T-cell (primary cell): ENCODE measurements at regions of chr14 and their contacts with region 1.

Region 1: GRCh38 chr14:103808403-103809001 is 38.9 kb downstream of the PPP1R13B start:
- DNase-seq: peak; percentile 19 to 82 (median 55)
- ATAC-seq: peak; percentile 74 to 91 (median 82)
- H3K4me3 ChIP-seq: no peak overlapping the region
- H3K4me3 Mint-ChIP-seq: no peak overlapping the region
- H3K27ac ChIP-seq: no peak overlapping the region
- H3K27ac Mint-ChIP-seq: no peak overlapping the region
- H3K4me1 ChIP-seq: no peaks in the 10 kb centered on the region
- H3K4me1 Mint-ChIP-seq: peaks cover 7 to 26% (median 8%) of the 10 kb centered on the region in 3 donors
- H3K27me3 ChIP-seq: no peaks in the 10 kb centered on the region
- H3K27me3 Mint-ChIP-seq: no peaks in the 10 kb centered on the region

Region 2: GRCh38 chr14:103904493-103905107 is 96.1 kb after region 1 on chr14:
- CTCF ChIA-PET with region 1: interaction called, 5 to 51 read pairs
- POLR2A ChIA-PET with region 1: no interaction called
- DNase-seq: no peak
- ATAC-seq: no peak
- H3K4me3 ChIP-seq: no peak overlapping the region
- H3K4me3 Mint-ChIP-seq: no peak overlapping the region
- H3K27ac ChIP-seq: no peak overlapping the region
- H3K27ac Mint-ChIP-seq: no peak overlapping the region
- H3K4me1 ChIP-seq: peaks cover 2 to 20% of the 10 kb centered on the region in 2 experiments
- H3K4me1 Mint-ChIP-seq: peaks cover 16 to 24% (median 20%) of the 10 kb centered on the region in 3 donors
- H3K27me3 ChIP-seq: peaks cover 0 to 10% of the 10 kb centered on the region in 2 experiments
- H3K27me3 Mint-ChIP-seq: peaks cover 4 to 5% of the 10 kb centered on the region in 2 donors

Region 3: GRCh38 chr14:103910262-103910935 is 101.9 kb after region 1 on chr14:
- CTCF ChIA-PET with region 1: interaction called, 5 to 51 read pairs
- POLR2A ChIA-PET with region 1: no interaction called
- DNase-seq: peak; percentile 46 to 84 (median 61)
- ATAC-seq: peak; percentile 73 to 81 (median 78)
- H3K4me3 ChIP-seq: peak overlapping the region; percentile 14 to 52
- H3K4me3 Mint-ChIP-seq: peak overlapping the region; percentile 59 to 70 (median 64)
- H3K27ac ChIP-seq: no peak overlapping the region
- H3K27ac Mint-ChIP-seq: peak overlapping the region; percentile 83 to 84
- H3K4me1 ChIP-seq: peaks cover 7 to 22% of the 10 kb centered on the region in 2 experiments
- H3K4me1 Mint-ChIP-seq: peaks cover 25 to 28% (median 27%) of the 10 kb centered on the region in 3 donors
- H3K27me3 ChIP-seq: peaks cover 0 to 4% of the 10 kb centered on the region in 2 experiments
- H3K27me3 Mint-ChIP-seq: peaks cover 0 to 4% of the 10 kb centered on the region in 2 donors